ENCODE measurements at regions of chr10 and their contacts with region 1.

Region 1: DNA sequence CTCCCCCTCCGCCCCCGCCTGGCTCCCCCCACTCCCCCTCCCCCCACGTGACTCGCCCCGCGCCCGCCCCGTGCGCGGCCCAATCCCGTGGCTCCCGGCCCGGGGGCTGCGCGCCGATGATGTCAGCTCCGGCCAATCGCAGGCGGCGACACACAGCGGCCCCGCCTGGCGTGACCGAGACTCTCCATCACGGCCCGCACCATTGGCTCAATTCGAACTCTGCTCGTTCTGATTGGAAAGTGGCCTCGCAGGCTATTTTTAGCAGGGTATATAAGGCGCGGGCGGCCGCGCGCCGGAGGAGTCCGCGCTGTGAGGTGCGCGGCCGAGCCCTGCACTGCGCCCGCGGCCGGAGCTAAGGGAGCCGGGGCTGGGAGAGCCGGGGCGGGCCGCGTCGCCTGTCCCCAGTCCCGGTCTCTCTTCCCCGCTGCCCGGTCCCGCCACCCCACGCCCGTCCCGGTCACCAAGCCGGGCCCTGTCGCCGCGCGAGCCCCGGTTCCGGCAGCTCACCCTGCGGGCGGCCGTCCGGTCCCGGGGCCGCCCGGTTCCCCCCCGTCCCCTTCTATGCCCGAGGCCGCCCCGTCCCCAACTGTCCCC is 345 bp upstream of the KLF6 start:
- DNase-seq: peak; percentile 99 to 100 (median 99)
- ATAC-seq: peak; percentile 86
- H3K4me3 ChIP-seq: peak overlapping the region; percentile 75
- H3K4me3 Mint-ChIP-seq: peak overlapping the region; percentile 85 to 99 (median 94)
- H3K27ac ChIP-seq: peak overlapping the region; percentile 99
- H3K27ac Mint-ChIP-seq: peak overlapping the region; percentile 93 to 99 (median 99)
- H3K4me1 ChIP-seq: peaks cover 21 to 30% of the 10 kb centered on the region in 2 donors
- H3K4me1 Mint-ChIP-seq: peaks cover 21 to 52% (median 37%) of the 10 kb centered on the region in 7 donors
- H3K27me3 ChIP-seq: no peaks in the 10 kb centered on the region
- H3K27me3 Mint-ChIP-seq: peaks cover 0 to 12% (median 0%) of the 10 kb centered on the region in 5 donors

Region 2: DNA sequence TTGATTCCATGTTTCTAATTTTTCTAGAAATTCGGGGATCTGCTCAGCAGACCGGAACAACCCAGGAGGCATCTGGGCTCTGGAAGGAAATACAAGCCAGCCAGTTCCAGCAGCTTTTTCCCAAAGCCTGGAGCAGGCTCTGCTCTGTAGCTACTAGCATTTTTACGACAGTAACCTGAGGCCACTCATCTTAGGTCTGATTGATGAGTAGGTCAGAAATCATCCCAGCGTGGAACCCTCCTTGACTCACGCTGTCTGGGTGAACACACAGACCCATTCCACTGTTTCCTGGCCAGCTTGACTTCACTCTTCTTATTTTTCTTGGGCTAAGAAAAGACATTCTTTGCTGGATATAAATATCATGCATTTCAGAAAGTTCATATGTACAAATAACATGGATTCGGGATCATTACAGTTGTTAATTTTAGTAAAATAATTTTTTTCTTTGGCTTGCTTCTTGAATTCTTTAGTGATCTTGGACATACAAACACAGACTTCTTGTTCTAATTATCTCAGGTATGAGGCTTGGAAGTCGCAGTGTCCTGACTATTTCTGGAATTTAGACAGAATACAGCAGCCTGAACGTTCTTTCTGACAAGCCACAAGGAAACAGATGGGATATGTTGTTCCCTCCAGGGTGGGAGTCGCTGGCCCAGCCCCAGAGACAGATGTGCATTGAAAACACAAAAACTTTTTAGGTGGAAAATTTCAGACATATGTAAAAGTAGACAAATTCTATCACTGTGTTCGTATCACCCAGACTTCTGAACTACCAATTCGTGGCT is 558.2 kb before region 1 on chr10:
- CTCF ChIA-PET with region 1: no interaction called
- POLR2A ChIA-PET with region 1: no interaction called
- intact Hi-C with region 1: loop called in 1 of 2 experiments (anchors 5 kb)
- DNase-seq: no peak
- ATAC-seq: no peak
- H3K4me3 ChIP-seq: no peak overlapping the region
- H3K4me3 Mint-ChIP-seq: no peak overlapping the region
- H3K27ac ChIP-seq: no peak overlapping the region
- H3K27ac Mint-ChIP-seq: peak overlapping the region in 1 of 9 donors; percentile 23
- H3K4me1 ChIP-seq: peaks cover 0 to 25% of the 10 kb centered on the region in 2 donors
- H3K4me1 Mint-ChIP-seq: peaks cover 6 to 14% (median 8%) of the 10 kb centered on the region in 7 donors
- H3K27me3 ChIP-seq: no peaks in the 10 kb centered on the region
- H3K27me3 Mint-ChIP-seq: peaks cover 0 to 31% (median 0%) of the 10 kb centered on the region in 5 donors

Region 3: DNA sequence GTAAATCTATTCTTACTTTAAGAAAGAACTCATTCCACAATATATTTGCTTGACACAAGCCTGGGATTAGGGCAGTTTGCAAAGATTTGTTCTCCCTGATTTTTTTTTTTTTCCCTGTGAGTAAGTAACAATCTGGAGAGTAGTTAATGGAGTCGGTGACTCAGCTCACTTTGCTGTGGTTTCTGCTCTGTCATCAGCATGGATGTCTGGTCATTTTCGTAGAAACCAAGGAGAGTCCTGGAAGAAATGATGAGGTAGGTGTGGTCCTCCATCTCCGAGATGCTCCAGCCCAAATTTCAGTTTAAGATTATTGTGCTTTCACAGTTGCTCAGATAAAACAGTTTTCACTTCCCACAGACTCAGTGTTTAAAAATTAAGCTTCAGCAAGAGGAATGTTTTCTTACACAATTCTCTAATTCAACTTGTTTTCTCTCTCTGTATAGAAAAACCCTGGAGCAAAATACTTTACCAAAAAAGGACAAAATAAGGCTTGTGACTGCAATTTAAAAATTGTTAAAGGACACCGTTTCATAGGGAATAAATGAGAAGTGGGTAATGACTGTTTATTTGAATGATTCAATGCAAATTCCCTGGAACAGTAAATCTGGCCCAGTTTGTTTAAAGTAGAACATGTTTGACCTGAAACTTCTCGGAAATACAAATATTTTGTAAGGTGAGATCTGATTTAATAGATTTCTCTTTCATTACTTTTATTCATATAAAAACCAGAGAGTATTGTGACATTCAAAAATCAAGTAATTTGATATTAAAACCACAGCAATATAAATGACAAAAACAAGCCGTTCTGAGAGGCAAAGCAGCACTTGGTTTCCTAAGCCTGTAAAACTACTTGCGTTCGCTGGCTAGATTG is 536.2 kb before region 1 on chr10:
- CTCF ChIA-PET with region 1: no interaction called
- POLR2A ChIA-PET with region 1: no interaction called
- intact Hi-C with region 1: no loop called
- DNase-seq: no peak
- ATAC-seq: no peak
- H3K4me3 ChIP-seq: no peak overlapping the region
- H3K4me3 Mint-ChIP-seq: no peak overlapping the region
- H3K27ac ChIP-seq: no peak overlapping the region
- H3K27ac Mint-ChIP-seq: no peak overlapping the region
- H3K4me1 ChIP-seq: no peaks in the 10 kb centered on the region
- H3K4me1 Mint-ChIP-seq: no peaks in the 10 kb centered on the region
- H3K27me3 ChIP-seq: no peaks in the 10 kb centered on the region
- H3K27me3 Mint-ChIP-seq: peaks cover 11 to 51% (median 27%) of the 10 kb centered on the region in 5 donors

Region 4: DNA sequence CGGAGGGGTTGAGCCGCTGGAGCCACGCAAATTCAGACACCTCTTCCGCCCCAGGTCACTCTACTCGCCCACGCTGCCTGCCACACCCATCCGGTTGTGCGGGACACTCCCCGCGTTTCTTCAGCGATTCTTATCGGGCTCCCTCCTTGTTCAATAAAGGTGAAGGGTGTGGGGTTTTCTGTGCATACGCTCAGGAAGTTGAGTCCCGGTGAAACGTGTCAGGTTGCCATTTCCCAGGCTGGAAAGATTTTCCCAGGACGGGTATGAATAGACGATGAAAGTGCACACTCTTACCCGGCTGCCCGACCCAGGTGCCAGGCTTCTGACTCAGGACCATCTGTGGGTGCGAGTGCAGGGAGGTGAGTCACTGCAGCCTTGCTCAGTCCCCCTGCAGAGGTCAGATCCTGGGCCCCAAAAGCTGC is 22.3 kb before region 1 on chr10:
- CTCF ChIA-PET with region 1: no interaction called
- POLR2A ChIA-PET with region 1: interaction called, 42 read pairs
- intact Hi-C with region 1: loop called (anchors 1 to 2 kb)
- DNase-seq: no peak
- ATAC-seq: no peak
- H3K4me3 ChIP-seq: no peak overlapping the region
- H3K4me3 Mint-ChIP-seq: peak overlapping the region in 1 of 10 donors; percentile 42
- H3K27ac ChIP-seq: no peak overlapping the region
- H3K27ac Mint-ChIP-seq: peak overlapping the region in 1 of 9 donors; percentile 53
- H3K4me1 ChIP-seq: peaks cover 20 to 67% of the 10 kb centered on the region in 2 donors
- H3K4me1 Mint-ChIP-seq: peaks cover 19 to 86% (median 40%) of the 10 kb centered on the region in 7 donors
- H3K27me3 ChIP-seq: no peaks in the 10 kb centered on the region
- H3K27me3 Mint-ChIP-seq: no peaks in the 10 kb centered on the region

Region 5: DNA sequence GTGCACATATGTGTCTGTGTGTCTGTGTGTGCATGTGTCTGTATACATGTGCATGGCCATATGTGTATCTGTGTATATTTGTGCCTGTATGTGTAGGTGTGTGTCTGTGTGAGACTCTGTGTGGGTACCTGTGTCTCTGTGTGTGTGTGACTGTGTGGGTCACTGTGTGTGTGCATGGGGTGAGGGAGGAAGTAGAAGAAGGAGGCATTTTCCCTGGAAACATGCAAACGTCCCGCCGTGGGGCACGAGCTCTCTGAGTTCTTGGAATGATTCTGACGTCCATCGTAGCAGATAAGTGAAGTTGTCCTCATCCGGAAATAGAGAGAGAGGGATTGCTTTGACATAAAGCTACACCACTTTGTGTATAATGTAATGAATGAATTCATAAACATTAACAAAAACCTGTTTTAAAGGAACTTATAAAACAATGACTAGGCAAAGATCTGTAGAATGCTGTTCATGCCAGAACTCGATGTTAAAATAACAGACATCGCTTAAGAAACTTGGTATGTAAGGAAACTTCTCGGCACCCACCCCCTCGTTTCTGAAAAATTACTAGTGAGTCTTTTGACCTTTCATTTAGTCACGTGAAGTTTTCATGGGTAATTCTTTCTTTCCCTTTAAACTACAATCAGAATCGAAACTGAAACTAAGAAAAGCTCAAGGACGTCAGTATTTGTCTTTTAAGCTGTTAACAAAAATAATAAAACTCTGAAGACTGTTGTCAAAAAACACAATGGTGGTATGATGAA is 43.2 kb after region 1 on chr10:
- CTCF ChIA-PET with region 1: interaction called, 3 read pairs
- POLR2A ChIA-PET with region 1: interaction called, 91 read pairs
- intact Hi-C with region 1: loop called (anchors 1 to 2 kb)
- DNase-seq: peak in 6 of 9 donors; percentile 40 to 66 (median 54)
- ATAC-seq: peak; percentile 63
- H3K4me3 ChIP-seq: peak overlapping the region; percentile 65
- H3K4me3 Mint-ChIP-seq: peak overlapping the region; percentile 73 to 88 (median 78)
- H3K27ac ChIP-seq: peak overlapping the region; percentile 73
- H3K27ac Mint-ChIP-seq: peak overlapping the region; percentile 80 to 92 (median 90)
- H3K4me1 ChIP-seq: peaks cover 15 to 17% of the 10 kb centered on the region in 2 donors
- H3K4me1 Mint-ChIP-seq: peaks cover 12 to 54% (median 22%) of the 10 kb centered on the region in 7 donors
- H3K27me3 ChIP-seq: no peaks in the 10 kb centered on the region
- H3K27me3 Mint-ChIP-seq: no peaks in the 10 kb centered on the region

Region 6: DNA sequence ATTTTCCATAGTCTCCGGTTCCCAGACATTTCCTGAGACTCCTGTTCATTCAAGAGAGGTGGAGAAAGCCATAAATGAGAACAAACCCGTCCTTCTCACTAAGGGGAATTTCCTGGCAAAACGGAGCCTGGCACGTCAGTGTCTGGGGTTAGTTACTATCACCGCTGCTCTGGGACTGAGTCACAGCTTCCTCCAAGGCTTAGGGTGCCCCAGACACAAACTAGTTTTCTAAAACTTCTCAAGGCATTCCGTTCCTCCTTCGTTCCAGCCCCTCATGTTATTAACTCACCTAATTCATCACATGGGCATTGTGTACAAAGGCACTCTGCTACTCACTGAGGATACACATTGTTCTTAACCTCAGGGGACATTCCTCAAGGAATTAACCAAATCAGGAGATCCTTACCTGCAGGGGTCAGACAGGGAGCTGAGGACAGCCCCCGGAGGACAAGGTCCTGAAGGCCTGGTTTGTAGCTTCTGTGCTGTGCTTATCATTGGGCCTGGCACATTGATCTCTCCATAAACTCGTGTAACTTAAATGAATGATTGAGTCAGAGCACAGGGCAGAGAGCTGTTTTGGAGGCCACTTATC is 102.6 kb after region 1 on chr10:
- CTCF ChIA-PET with region 1: no interaction called
- POLR2A ChIA-PET with region 1: interaction called, 13 read pairs
- intact Hi-C with region 1: no loop called
- DNase-seq: no peak
- ATAC-seq: peak; percentile 85
- H3K4me3 ChIP-seq: no peak overlapping the region
- H3K4me3 Mint-ChIP-seq: peak overlapping the region in 1 of 10 donors; percentile 62
- H3K27ac ChIP-seq: no peak overlapping the region
- H3K27ac Mint-ChIP-seq: peak overlapping the region in 1 of 9 donors; percentile 84
- H3K4me1 ChIP-seq: peaks cover 0 to 32% of the 10 kb centered on the region in 2 donors
- H3K4me1 Mint-ChIP-seq: peaks cover 4 to 43% (median 10%) of the 10 kb centered on the region in 7 donors
- H3K27me3 ChIP-seq: no peaks in the 10 kb centered on the region
- H3K27me3 Mint-ChIP-seq: peaks cover 0 to 5% (median 0%) of the 10 kb centered on the region in 5 donors

Region 7: DNA sequence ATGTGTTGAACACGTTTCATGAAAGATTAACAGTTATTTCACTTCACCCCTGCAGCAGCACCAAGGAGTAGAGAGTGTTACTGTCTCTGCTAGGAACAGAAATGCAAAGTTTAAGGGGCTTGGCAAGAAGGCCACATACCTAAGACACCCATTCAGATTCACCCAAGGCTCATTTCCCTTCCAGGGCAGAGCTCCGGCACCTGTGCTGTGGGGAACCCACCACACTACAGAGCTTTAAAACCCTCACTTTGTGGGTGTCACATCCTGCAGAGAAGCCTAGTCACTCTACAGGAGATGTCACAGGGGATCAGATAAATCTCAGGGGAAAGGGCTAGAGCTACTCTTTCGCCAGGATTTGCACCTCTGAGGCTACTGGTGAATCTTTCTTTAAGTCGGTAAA is 175.7 kb after region 1 on chr10:
- CTCF ChIA-PET with region 1: no interaction called
- POLR2A ChIA-PET with region 1: interaction called, 25 read pairs
- intact Hi-C with region 1: no loop called
- DNase-seq: peak in 6 of 9 donors; percentile 32 to 55 (median 40)
- ATAC-seq: peak; percentile 92
- H3K4me3 ChIP-seq: no peak overlapping the region
- H3K4me3 Mint-ChIP-seq: peak overlapping the region in 6 of 10 donors; percentile 8 to 70 (median 28)
- H3K27ac ChIP-seq: no peak overlapping the region
- H3K27ac Mint-ChIP-seq: peak overlapping the region in 8 of 9 donors; percentile 10 to 84 (median 50)
- H3K4me1 ChIP-seq: peaks cover 12 to 33% of the 10 kb centered on the region in 2 donors
- H3K4me1 Mint-ChIP-seq: peaks cover 12 to 43% (median 18%) of the 10 kb centered on the region in 7 donors
- H3K27me3 ChIP-seq: no peaks in the 10 kb centered on the region
- H3K27me3 Mint-ChIP-seq: no peaks in the 10 kb centered on the region

Region 8: GRCh38 chr10:4291990-4292389 is 506.6 kb after region 1 on chr10:
- CTCF ChIA-PET with region 1: no interaction called
- POLR2A ChIA-PET with region 1: no interaction called
- intact Hi-C with region 1: no loop called
- DNase-seq: no peak
- ATAC-seq: no peak
- H3K4me3 ChIP-seq: no peak overlapping the region
- H3K4me3 Mint-ChIP-seq: no peak overlapping the region
- H3K27ac ChIP-seq: no peak overlapping the region
- H3K27ac Mint-ChIP-seq: no peak overlapping the region
- H3K4me1 ChIP-seq: no peaks in the 10 kb centered on the region
- H3K4me1 Mint-ChIP-seq: no peaks in the 10 kb centered on the region
- H3K27me3 ChIP-seq: no peaks in the 10 kb centered on the region
- H3K27me3 Mint-ChIP-seq: peaks cover 0 to 15% (median 0%) of the 10 kb centered on the region in 5 donors

Measured in naive thymus-derived CD4-positive, alpha-beta T cell (primary cell).